Activated B cell treated with CpG ODN at 0.5 μM for 24 hours (primary cell): ENCODE measurements at regions of chr10 and their contacts with region 1.

Region 1: DNA sequence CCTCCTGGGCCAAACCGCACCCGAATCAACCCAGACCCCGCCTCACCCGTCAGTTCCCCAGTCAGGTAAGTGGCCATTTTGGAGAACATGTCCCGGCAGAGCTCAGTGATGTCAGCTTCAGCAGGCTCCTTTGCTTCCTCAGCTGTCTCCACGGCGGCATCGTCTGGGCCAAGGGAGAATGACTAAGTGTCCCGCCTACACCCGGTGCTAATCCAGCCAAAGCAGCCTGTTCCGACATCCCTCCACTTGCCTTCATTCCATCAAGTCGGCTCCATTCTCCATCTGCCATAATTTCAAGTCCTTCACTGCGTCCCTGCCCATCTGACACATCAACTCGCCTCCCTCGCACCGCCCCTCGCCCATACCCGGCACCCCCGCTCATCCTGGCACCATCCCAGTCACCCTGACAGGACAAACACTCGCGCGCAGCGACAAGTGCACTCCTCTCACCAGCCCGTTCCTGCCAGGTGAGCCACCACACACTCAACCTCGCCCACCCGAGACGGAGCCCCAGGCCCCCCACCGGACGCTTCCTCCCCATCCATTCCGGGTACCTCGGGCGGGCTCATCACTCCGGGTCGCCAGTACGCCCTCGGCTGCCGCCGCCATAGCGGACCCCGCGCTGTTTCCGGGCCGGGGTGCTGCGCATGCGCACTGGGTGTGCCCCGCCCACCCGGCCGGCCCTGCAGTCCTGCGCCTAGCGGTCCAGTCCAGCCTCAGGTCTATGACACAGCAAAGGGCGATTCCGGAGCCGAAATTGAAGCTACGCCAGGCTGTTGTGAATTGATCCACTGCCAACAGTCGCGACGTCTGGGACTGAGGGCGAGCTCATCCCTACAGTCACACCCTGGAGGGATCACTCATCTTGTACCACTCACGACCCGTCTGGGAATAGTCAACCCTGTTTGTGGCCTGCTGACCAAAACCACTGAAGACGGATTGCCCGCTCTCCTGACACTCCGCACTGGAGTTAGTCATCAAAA is at the start of gene BLOC1S2:
- DNase-seq: peak; percentile 95
- ATAC-seq: peak; percentile 86
- H3K4me3 Mint-ChIP-seq: peak within 1 kb of the TSS; percentile 99
- H3K27ac Mint-ChIP-seq: peak within 1 kb of the TSS; percentile 97
- H3K4me1 Mint-ChIP-seq: no peaks in the 10 kb centered on the region
- H3K27me3 Mint-ChIP-seq: no peaks in the 10 kb centered on the region
- CTCF ChIP-seq: no peak
- total RNA-seq, gene BLOC1S2: 47.7 and 52.3 TPM in 2 replicates

Region 2: DNA sequence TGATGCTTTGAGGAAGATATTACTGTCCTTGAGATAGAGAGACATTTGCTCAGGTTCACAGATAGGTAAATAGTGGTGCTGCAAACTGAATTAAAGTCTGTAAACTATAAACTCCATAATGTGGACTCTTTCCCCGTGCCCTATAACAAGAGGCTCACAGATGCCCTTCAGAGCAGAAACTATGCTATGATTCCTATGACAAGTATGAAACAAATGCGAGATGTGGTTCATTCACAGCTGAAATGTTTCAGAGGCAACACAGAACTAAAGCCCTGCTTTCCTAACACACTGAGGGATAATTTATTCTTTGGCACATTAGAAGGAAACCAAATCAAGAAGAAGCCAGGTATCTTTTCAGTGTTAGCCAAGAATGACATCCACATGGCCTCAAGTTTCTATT is 70.3 kb before region 1 on chr10:
- CTCF ChIA-PET with region 1: no interaction called
- POLR2A ChIA-PET with region 1: no interaction called
- intact Hi-C with region 1: no loop called
- DNase-seq: no peak
- ATAC-seq: no peak
- H3K4me3 Mint-ChIP-seq: no peak overlapping the region
- H3K27ac Mint-ChIP-seq: no peak overlapping the region
- H3K4me1 Mint-ChIP-seq: no peaks in the 10 kb centered on the region
- H3K27me3 Mint-ChIP-seq: no peaks in the 10 kb centered on the region
- CTCF ChIP-seq: no peak

Region 3: GRCh38 chr10:100267237-100268104 is 18.9 kb before region 1 on chr10 and contains the start of gene CWF19L1:
- CTCF ChIA-PET with region 1: no interaction called
- POLR2A ChIA-PET with region 1: interaction called, 6 read pairs
- intact Hi-C with region 1: loop called (anchors 1 kb)
- DNase-seq: peak; percentile 62
- ATAC-seq: peak; percentile 80
- H3K4me3 Mint-ChIP-seq: peak within 1 kb of the TSS; percentile 99
- H3K27ac Mint-ChIP-seq: peak within 1 kb of the TSS; percentile 97
- H3K4me1 Mint-ChIP-seq: peaks cover 33% of the 10 kb centered on the region
- H3K27me3 Mint-ChIP-seq: no peaks in the 10 kb centered on the region
- CTCF ChIP-seq: no peak
- total RNA-seq, gene CWF19L1: 41.8 and 53.3 TPM in 2 replicates

Region 4: DNA sequence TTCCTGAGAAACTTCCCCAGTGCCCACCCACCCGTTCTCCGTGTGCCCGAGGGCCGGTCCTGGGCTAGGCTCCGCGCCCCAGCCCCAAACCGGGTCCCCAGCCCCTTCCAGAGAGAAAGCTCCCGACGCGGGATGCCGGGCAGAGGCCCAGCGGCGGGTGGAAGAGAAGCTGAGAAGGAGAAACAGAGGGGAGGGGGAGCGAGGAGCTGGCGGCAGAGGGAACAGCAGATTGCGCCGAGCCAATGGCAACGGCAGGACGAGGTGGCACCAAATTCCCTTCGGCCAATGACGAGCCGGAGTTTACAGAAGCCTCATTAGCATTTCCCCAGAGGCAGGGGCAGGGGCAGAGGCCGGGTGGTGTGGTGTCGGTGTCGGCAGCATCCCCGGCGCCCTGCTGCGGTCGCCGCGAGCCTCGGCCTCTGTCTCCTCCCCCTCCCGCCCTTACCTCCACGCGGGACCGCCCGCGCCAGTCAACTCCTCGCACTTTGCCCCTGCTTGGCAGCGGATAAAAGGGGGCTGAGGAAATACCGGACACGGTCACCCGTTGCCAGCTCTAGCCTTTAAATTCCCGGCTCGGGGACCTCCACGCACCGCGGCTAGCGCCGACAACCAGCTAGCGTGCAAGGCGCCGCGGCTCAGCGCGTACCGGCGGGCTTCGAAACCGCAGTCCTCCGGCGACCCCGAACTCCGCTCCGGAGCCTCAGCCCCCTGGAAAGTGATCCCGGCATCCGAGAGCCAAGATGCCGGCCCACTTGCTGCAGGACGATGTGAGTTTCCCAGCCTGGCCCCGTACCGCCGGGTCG is 60.6 kb after region 1 on chr10 and contains the start of gene SCD:
- CTCF ChIA-PET with region 1: no interaction called
- POLR2A ChIA-PET with region 1: interaction called, 6 read pairs
- intact Hi-C with region 1: loop called (anchors 2 kb)
- DNase-seq: peak; percentile 69
- ATAC-seq: peak; percentile 95
- H3K4me3 Mint-ChIP-seq: peak within 1 kb of the TSS; percentile 89
- H3K27ac Mint-ChIP-seq: peak within 1 kb of the TSS; percentile 61
- H3K4me1 Mint-ChIP-seq: peaks cover 22% of the 10 kb centered on the region
- H3K27me3 Mint-ChIP-seq: peaks cover 3% of the 10 kb centered on the region
- CTCF ChIP-seq: no peak
- total RNA-seq, gene SCD: 24.9 and 26.0 TPM in 2 replicates

Region 5: GRCh38 chr10:100481462-100482081 is 195.2 kb after region 1 on chr10:
- CTCF ChIA-PET with region 1: no interaction called
- POLR2A ChIA-PET with region 1: no interaction called
- intact Hi-C with region 1: loop called (anchors 2 kb)
- DNase-seq: peak; percentile 89
- ATAC-seq: peak; percentile 99
- H3K4me3 Mint-ChIP-seq: peak overlapping the region; percentile 87
- H3K27ac Mint-ChIP-seq: no peak overlapping the region
- H3K4me1 Mint-ChIP-seq: peaks cover 9% of the 10 kb centered on the region
- H3K27me3 Mint-ChIP-seq: peaks cover 30% of the 10 kb centered on the region
- CTCF ChIP-seq: no peak